PC-9 (cell line): ENCODE measurements at regions of chr9 and their contacts with region 1.

Region 1: DNA sequence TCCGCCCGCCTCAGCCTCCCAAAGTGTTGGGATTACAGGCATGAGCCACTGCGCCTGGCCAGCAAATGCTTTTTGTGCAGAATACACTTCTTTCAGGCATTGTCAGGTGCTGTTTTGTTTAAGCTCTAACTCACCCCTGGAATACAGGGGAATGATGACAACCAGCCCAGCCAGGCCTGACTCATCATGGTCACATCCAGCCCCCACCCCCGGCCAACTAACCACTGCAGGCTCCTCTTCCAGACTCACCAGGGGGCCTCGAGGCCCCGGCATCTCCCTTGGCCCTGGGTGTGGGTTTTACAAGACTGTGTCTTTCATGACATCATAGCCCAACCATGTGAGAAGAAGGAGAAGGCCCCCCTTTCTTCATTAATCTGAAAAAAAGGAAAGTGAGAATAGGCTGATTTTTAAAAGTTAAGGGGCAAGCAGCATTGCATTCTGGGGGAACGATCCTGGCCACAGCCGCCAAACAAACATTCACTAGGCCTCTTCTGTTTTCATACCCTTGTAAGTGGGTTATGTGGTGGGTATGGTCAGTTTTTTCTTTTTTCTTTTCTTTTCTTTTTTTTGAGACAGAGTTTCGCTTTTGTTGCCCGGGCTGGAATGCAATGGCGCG is 35.6 kb downstream of the OLFML2A start:
- DNase-seq: peak; percentile 93 to 96
- H3K4me3 ChIP-seq: no peak overlapping the region
- H3K27ac ChIP-seq: peak overlapping the region; percentile 94
- H3K4me1 ChIP-seq: peaks cover 45% of the 10 kb centered on the region
- H3K27me3 ChIP-seq: no peaks in the 10 kb centered on the region
- CTCF ChIP-seq: no peak

Region 2: GRCh38 chr9:124436320-124436719 is 376.2 kb before region 1 on chr9:
- CTCF ChIA-PET with region 1: no interaction called
- POLR2A ChIA-PET with region 1: interaction called, 37 read pairs
- intact Hi-C with region 1: no loop called
- DNase-seq: no peak
- H3K4me3 ChIP-seq: no peak overlapping the region
- H3K27ac ChIP-seq: no peak overlapping the region
- H3K4me1 ChIP-seq: no peaks in the 10 kb centered on the region
- H3K27me3 ChIP-seq: no peaks in the 10 kb centered on the region
- CTCF ChIP-seq: no peak

Region 3: GRCh38 chr9:124779362-124780059 is 33.0 kb before region 1 on chr9:
- CTCF ChIA-PET with region 1: interaction called, 11 read pairs
- POLR2A ChIA-PET with region 1: interaction called, 17 read pairs
- intact Hi-C with region 1: loop called (anchors 1 kb)
- DNase-seq: peak; percentile 77 to 90
- H3K4me3 ChIP-seq: no peak overlapping the region
- H3K27ac ChIP-seq: no peak overlapping the region
- H3K4me1 ChIP-seq: peaks cover 18% of the 10 kb centered on the region
- H3K27me3 ChIP-seq: 0 out of 2 replicates have a peak, but pooled peaks cover 7% of the 10 kb centered on the region
- CTCF ChIP-seq: no peak

Region 4: GRCh38 chr9:124834591-124834990 is 22.1 kb after region 1 on chr9:
- CTCF ChIA-PET with region 1: interaction called, 5 read pairs
- POLR2A ChIA-PET with region 1: interaction called, 3 read pairs
- intact Hi-C with region 1: loop called (anchors 1 kb)
- DNase-seq: peak; percentile 71 to 89
- H3K4me3 ChIP-seq: no peak overlapping the region; the same call in 1 of the 2 replicates
- H3K27ac ChIP-seq: peak overlapping the region; percentile 59
- H3K4me1 ChIP-seq: peaks cover 20% of the 10 kb centered on the region
- H3K27me3 ChIP-seq: no peaks in the 10 kb centered on the region
- CTCF ChIP-seq: no peak

Region 5: GRCh38 chr9:125612616-125613540 is 800.4 kb after region 1 on chr9:
- CTCF ChIA-PET with region 1: no interaction called
- POLR2A ChIA-PET with region 1: interaction called, 20 read pairs
- intact Hi-C with region 1: no loop called
- DNase-seq: no peak
- H3K4me3 ChIP-seq: no peak overlapping the region
- H3K27ac ChIP-seq: no peak overlapping the region
- H3K4me1 ChIP-seq: no peaks in the 10 kb centered on the region
- H3K27me3 ChIP-seq: no peaks in the 10 kb centered on the region
- CTCF ChIP-seq: no peak